Activated CD4-positive, alpha-beta memory T cell treated with anti-CD3 and anti-CD28 coated beads for 36 hours (primary cell): ENCODE measurements at regions of chr2 and their contacts with region 1.

Region 1: DNA sequence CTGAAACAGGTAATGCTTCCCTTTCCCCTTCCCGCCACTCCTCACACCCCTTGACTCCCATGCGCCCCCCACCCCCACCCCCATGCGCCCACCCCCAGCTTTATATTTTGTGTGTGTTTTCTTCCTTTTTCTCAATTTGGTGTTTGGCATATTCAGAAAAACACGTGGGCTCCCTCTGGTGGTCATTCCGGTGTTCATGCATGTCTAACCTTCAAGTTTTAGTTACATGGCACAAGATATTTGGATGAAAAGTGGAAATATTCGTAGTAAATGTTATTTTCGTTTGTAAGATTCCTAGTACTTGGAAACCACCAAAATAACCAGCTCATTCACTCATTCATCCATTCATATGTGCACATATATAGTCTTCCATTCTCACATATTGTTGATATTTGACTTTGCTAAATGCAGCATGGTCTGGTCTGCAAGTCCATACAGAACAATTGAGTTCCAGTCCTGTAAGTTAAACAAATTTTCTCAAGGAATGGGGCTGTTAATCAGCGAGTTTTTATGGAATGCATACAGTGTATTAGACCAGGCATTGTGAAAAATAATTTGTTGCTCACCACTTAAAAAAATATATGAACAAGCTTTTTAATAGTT is 143.6 kb upstream of the MAP3K20 start:
- DNase-seq: peak; percentile 64
- H3K4me3 Mint-ChIP-seq: no peak overlapping the region
- H3K27ac Mint-ChIP-seq: no peak overlapping the region
- H3K4me1 Mint-ChIP-seq: peaks cover 4% of the 10 kb centered on the region
- H3K27me3 Mint-ChIP-seq: peaks cover 15% of the 10 kb centered on the region

Region 2: DNA sequence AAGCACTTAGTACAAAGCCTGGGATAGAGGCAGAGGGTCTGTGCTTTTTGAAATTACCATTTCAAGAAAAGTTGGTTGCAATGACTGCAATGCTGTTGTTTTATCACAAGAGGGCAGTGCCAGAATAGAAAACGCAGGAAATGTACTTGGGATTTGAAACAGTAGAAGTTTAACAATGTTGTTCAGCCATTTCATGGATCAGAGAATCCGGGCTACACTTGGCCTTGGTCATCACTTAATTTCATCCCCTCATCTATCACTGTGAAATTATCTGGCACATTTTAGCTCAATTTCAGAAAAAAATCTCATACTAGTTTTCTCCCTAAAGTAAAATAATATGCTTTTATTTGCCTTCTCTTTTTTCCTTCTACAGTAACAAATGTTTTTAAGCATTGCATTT is 125.5 kb before region 1 on chr2:
- CTCF ChIA-PET with region 1: interaction called, 47 read pairs
- POLR2A ChIA-PET with region 1: no interaction called
- intact Hi-C with region 1: loop called (anchors 1 kb)
- DNase-seq: no peak
- H3K4me3 Mint-ChIP-seq: no peak overlapping the region
- H3K27ac Mint-ChIP-seq: no peak overlapping the region
- H3K4me1 Mint-ChIP-seq: no peaks in the 10 kb centered on the region
- H3K27me3 Mint-ChIP-seq: peaks cover 5% of the 10 kb centered on the region

Region 3: DNA sequence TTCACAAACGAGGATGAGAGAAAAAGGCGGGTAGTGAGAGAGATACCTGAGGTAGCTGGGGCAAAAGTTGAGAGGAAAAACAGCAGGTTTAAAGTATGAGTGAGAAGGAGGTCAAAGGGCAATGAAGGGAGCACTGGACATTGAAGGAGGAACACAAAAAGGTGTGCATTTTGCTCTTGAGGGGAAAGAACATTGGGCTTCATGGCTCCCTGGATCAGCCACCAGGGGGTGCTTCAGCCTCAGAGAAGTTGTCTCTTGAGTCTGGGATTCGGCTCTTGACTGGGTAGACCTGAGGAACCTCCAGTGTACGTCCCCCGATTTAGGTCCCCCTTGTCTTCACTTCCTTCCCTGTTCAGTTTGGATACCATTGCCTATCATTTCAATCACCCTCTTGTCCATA is 67.8 kb before region 1 on chr2:
- CTCF ChIA-PET with region 1: interaction called, 7 read pairs
- POLR2A ChIA-PET with region 1: no interaction called
- intact Hi-C with region 1: loop called (anchors 1 kb)
- DNase-seq: peak; percentile 55
- H3K4me3 Mint-ChIP-seq: no peak overlapping the region
- H3K27ac Mint-ChIP-seq: no peak overlapping the region
- H3K4me1 Mint-ChIP-seq: no peaks in the 10 kb centered on the region
- H3K27me3 Mint-ChIP-seq: peaks cover 21% of the 10 kb centered on the region

Region 4: DNA sequence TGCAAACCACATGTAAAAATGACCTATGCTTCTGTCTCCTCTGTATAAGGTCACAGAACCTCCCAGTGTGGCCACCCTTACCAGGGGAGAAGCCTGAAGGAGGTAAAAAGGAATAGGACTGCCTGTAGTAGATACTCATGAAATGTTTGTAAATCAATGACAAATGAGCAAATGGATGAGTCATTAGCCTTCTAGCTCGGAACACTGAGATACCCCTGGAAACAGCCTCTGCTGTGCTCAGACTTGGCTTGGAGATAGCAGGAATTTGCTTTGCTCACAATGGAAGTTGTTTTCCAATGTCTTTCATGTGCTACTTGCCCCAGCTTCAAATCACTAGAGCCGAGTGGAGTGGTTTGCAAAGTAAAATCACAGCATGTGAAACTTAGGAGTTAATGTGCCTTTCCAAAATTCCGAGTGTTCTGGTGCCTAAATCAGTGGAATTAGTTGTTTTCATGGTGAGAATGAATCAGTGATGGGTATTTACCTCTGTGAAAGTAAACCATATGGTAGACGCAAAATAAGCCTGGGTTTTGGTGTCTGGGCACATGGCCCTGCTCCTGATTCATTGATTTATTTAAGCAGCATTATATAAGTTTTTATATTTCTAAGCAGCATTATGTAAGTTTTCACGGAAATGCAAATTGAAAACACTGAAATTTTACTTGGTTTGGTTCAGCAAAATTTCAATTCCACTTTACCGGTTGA is 10.3 kb before region 1 on chr2:
- CTCF ChIA-PET with region 1: interaction called, 14 read pairs
- POLR2A ChIA-PET with region 1: no interaction called
- intact Hi-C with region 1: no loop called
- DNase-seq: no peak
- H3K4me3 Mint-ChIP-seq: no peak overlapping the region
- H3K27ac Mint-ChIP-seq: no peak overlapping the region
- H3K4me1 Mint-ChIP-seq: no peaks in the 10 kb centered on the region
- H3K27me3 Mint-ChIP-seq: peaks cover 7% of the 10 kb centered on the region

Region 5: DNA sequence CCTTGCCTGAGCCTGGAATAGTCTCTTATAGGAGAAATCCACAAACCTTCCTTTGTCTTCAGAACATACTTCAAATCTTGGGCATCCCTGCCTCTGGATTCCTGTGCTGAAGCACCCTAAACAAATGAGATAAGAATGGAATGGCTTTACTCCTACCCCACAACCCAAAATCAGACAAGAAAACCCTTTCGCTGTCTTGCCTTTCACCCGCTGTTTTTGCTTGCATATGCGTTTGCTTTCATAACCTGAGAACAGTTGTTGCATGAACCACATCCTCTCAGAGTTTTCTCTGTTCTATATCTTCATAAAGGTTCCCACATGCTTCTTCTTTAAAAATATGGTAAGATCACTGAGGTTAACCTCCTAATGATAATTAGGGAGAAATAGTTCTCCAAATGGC is 11.5 kb after region 1 on chr2:
- CTCF ChIA-PET with region 1: interaction called, 11 read pairs
- POLR2A ChIA-PET with region 1: no interaction called
- intact Hi-C with region 1: no loop called
- DNase-seq: no peak
- H3K4me3 Mint-ChIP-seq: no peak overlapping the region
- H3K27ac Mint-ChIP-seq: no peak overlapping the region
- H3K4me1 Mint-ChIP-seq: peaks cover 3% of the 10 kb centered on the region
- H3K27me3 Mint-ChIP-seq: peaks cover 22% of the 10 kb centered on the region